ENCODE measurements at regions of chr9 and their contacts with region 1.

Region 1: GRCh38 chr9:79447762-79448161 is 124.0 kb upstream of the TLE4 start:
- DNase-seq: no peak
- H3K4me3 ChIP-seq: no peak overlapping the region
- H3K27ac ChIP-seq: no peak overlapping the region
- H3K4me1 ChIP-seq: no peaks in the 10 kb centered on the region
- H3K27me3 ChIP-seq: no peaks in the 10 kb centered on the region
- CTCF ChIP-seq: no peak
- EP300 ChIP-seq: no peak
- POLR2A ChIP-seq: no peak

Region 2: DNA sequence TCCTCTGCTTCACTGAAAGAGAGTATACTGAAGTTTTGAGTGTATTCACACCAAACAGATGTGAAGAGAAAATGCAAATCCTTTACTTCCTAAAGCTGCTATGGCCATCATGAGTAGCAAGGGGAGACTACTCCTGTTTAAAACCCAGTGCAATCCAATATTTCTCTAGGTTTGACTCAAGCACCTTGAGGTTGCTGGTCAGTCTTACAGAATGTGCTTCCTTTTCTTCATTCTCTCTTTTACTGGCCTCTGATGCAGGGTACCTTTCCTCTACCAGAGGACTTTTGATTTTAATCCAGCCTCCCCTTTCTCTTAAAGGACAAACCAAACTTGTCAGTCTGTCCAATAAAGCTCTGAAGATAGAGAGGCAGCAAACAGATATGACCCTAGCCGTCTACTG is 25.9 kb after region 1 on chr9:
- intact Hi-C with region 1: loop called in 1 of 4 experiments (anchors 2 kb)
- DNase-seq: no peak
- H3K4me3 ChIP-seq: no peak overlapping the region
- H3K27ac ChIP-seq: no peak overlapping the region
- H3K4me1 ChIP-seq: peaks cover 4% of the 10 kb centered on the region
- H3K27me3 ChIP-seq: no peaks in the 10 kb centered on the region
- CTCF ChIP-seq: no peak
- EP300 ChIP-seq: no peak
- POLR2A ChIP-seq: no peak